Aorta (tissue), 5 donors: ENCODE measurements at regions of chr9 and their contacts with region 1.

Region 1: GRCh38 chr9:129413537-129414376 is 207.1 kb downstream of the C9orf50 start:
- DNase-seq: peak; percentile 100
- ATAC-seq: peak; percentile 94
- H3K4me3 ChIP-seq: peak overlapping the region; percentile 32 to 55
- H3K27ac ChIP-seq: peak overlapping the region; percentile 95 to 98
- H3K4me1 ChIP-seq: peaks cover 0 to 3% of the 10 kb centered on the region in 2 donors
- H3K27me3 ChIP-seq: no peaks in the 10 kb centered on the region

Region 2: GRCh38 chr9:129333953-129334724 is 79.6 kb before region 1 on chr9:
- intact Hi-C with region 1: loop called in 1 of 2 experiments (anchors 2 kb)
- DNase-seq: peak; percentile 96 to 98
- ATAC-seq: peak; percentile 93
- H3K4me3 ChIP-seq: no peak overlapping the region
- H3K27ac ChIP-seq: peak overlapping the region; percentile 46 to 99
- H3K4me1 ChIP-seq: no peaks in the 10 kb centered on the region
- H3K27me3 ChIP-seq: no peaks in the 10 kb centered on the region

Region 3: GRCh38 chr9:129353697-129354336 is 59.9 kb before region 1 on chr9:
- intact Hi-C with region 1: loop called in 1 of 2 experiments (anchors 1 kb)
- DNase-seq: no peak
- ATAC-seq: no peak
- H3K4me3 ChIP-seq: no peak overlapping the region
- H3K27ac ChIP-seq: no peak overlapping the region
- H3K4me1 ChIP-seq: no peaks in the 10 kb centered on the region
- H3K27me3 ChIP-seq: no peaks in the 10 kb centered on the region

Region 4: GRCh38 chr9:129460323-129461261 is 46.8 kb after region 1 on chr9:
- intact Hi-C with region 1: loop called in 1 of 2 experiments (anchors 2 kb)
- DNase-seq: peak; percentile 98 to 99
- ATAC-seq: peak; percentile 94
- H3K4me3 ChIP-seq: peak overlapping the region in 1 of 2 donors; percentile 12
- H3K27ac ChIP-seq: peak overlapping the region; percentile 54 to 88
- H3K4me1 ChIP-seq: no peaks in the 10 kb centered on the region
- H3K27me3 ChIP-seq: no peaks in the 10 kb centered on the region